CD4-positive, alpha-beta memory T cell (primary cell): ENCODE measurements at regions of chr12 and their contacts with region 1.

Region 1: GRCh38 chr12:93677195-93678064 is at the start of gene CRADD:
- DNase-seq: peak; percentile 93 to 97 (median 96)
- H3K4me3 ChIP-seq: peak within 1 kb of the TSS; percentile 71 to 73
- H3K4me3 Mint-ChIP-seq: peak within 1 kb of the TSS; percentile 97 to 99 (median 98)
- H3K27ac ChIP-seq: peak within 1 kb of the TSS; percentile 99
- H3K27ac Mint-ChIP-seq: peak within 1 kb of the TSS; percentile 99 to 100 (median 100)
- H3K4me1 ChIP-seq: peaks cover 19% of the 10 kb centered on the region
- H3K4me1 Mint-ChIP-seq: peaks cover 20 to 37% (median 28%) of the 10 kb centered on the region in 4 donors
- H3K27me3 ChIP-seq: no peaks in the 10 kb centered on the region
- H3K27me3 Mint-ChIP-seq: peaks cover 11 to 12% of the 10 kb centered on the region in 2 donors
- total RNA-seq, gene CRADD: 15.7 to 16.0 TPM

Region 2: DNA sequence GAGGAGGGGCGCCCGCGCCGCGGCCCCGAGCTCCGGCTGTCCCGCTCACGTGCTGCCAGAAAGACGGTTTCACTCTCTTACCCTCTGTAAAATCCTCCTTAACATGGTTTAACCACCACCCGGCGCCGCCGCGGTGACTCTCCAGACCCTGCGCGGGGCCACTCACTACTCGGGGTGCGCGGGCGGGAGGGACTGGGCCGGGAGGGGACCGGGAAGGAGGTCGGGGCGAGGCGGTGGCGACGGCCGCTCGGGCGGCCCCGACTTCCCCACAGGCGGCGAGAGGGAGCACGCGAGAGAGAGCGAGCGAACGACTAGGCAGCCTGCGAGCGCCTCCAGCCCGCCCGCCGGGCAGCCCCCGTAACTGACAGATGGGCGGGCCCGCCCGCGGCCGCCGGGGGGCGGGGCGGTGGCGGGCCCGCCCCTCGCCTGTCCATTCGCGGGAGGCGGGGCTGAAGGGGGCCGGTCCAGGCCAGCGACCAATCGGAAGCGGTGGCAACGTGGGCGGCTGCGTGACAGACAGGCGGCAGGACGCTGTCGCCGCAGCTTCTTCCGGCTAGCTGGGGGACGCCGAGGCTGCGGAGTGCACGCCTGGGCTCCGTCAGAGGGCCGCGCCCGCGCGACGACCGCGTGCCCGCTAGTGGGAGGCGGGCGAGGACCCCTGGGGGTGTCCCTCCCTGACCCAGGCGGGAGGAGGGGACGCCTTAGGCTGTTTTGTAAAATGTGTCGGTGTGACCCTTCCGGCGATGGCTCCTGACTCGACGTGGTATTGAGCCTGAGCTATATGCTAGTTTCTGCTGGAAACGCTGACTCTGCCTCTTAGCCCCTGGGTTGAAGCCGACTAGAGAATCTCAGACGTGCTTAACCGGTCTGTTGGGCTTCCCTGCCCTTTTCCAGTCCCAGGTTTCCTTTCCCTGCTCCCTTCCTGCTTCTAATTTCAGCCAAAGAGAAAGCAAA is 748.2 kb before region 1 on chr12 and contains the start of gene EEA1:
- CTCF ChIA-PET with region 1: no interaction called
- POLR2A ChIA-PET with region 1: interaction called, 5 read pairs
- intact Hi-C with region 1: loop called (anchors 5 kb)
- DNase-seq: peak; percentile 92 to 94 (median 94)
- H3K4me3 ChIP-seq: peak within 1 kb of the TSS; percentile 57 to 59
- H3K4me3 Mint-ChIP-seq: peak within 1 kb of the TSS; percentile 89 to 94 (median 92)
- H3K27ac ChIP-seq: peak within 1 kb of the TSS; percentile 90
- H3K27ac Mint-ChIP-seq: peak within 1 kb of the TSS; percentile 87 to 98 (median 95)
- H3K4me1 ChIP-seq: peaks cover 28% of the 10 kb centered on the region
- H3K4me1 Mint-ChIP-seq: peaks cover 21 to 38% (median 32%) of the 10 kb centered on the region in 4 donors
- H3K27me3 ChIP-seq: no peaks in the 10 kb centered on the region
- H3K27me3 Mint-ChIP-seq: no peaks in the 10 kb centered on the region
- total RNA-seq, gene EEA1: 16.1 to 16.4 TPM

Region 3: DNA sequence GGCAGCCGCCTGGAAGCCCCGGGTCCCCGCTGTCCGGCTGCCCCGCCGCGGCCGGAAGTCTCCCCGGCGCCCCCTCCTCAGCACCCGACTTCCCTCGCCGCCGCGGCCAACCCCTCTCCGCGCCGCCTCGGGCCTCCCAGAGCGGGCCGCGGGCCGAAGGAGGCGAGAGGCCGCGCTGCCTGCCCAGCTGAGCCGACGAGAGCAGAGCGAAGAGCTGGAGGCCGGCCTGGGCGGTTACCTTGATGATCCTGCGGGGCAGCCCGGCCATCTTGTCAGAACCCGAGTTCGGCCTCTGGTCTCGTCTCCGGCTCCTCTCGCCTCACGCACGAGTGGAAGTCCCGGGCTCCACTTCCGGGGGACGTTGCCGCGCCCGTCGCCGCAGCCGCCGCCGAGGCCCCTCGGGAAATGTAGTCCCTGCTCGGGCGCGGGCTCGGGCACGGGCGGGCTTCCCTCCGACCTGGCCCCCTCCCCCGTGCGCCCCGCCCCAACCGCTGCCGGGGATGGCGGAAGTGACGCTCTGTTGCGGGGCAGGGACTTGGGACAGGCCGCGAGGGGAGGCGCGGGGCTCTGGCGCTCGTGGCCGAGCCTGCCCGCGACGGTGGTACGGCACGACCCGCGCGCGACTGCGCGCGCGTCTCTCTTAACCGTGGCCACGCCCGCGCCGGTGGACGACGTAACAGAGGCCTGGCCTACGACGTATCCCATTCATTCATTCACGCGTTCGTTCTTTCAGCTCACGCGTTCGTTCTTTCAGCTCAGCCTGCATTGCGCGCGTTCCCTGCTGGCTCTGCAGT is 235.6 kb before region 1 on chr12 and contains the start of gene UBE2N:
- CTCF ChIA-PET with region 1: no interaction called
- POLR2A ChIA-PET with region 1: interaction called, 5 read pairs
- intact Hi-C with region 1: loop called (anchors 1 kb)
- DNase-seq: peak; percentile 95 to 97 (median 97)
- H3K4me3 ChIP-seq: peak within 1 kb of the TSS; percentile 90 to 98
- H3K4me3 Mint-ChIP-seq: peak within 1 kb of the TSS; percentile 94 to 98 (median 97)
- H3K27ac ChIP-seq: peak within 1 kb of the TSS; percentile 95
- H3K27ac Mint-ChIP-seq: peak within 1 kb of the TSS; percentile 94 to 100 (median 99)
- H3K4me1 ChIP-seq: peaks cover 48% of the 10 kb centered on the region
- H3K4me1 Mint-ChIP-seq: peaks cover 36 to 51% (median 45%) of the 10 kb centered on the region in 4 donors
- H3K27me3 ChIP-seq: no peaks in the 10 kb centered on the region
- H3K27me3 Mint-ChIP-seq: no peaks in the 10 kb centered on the region
- total RNA-seq, gene UBE2N: 71.2 to 72.8 TPM

Region 4: GRCh38 chr12:93742110-93742934 is 64.9 kb after region 1 on chr12:
- CTCF ChIA-PET with region 1: no interaction called
- POLR2A ChIA-PET with region 1: no interaction called
- intact Hi-C with region 1: loop called (anchors 5 kb)
- DNase-seq: peak; percentile 40 to 58 (median 50)
- H3K4me3 ChIP-seq: peak overlapping the region; percentile 60 to 72
- H3K4me3 Mint-ChIP-seq: peak overlapping the region; percentile 91 to 98 (median 94)
- H3K27ac ChIP-seq: peak overlapping the region; percentile 63
- H3K27ac Mint-ChIP-seq: peak overlapping the region; percentile 87 to 95 (median 94)
- H3K4me1 ChIP-seq: peaks cover 25% of the 10 kb centered on the region
- H3K4me1 Mint-ChIP-seq: peaks cover 9 to 40% (median 21%) of the 10 kb centered on the region in 4 donors
- H3K27me3 ChIP-seq: no peaks in the 10 kb centered on the region
- H3K27me3 Mint-ChIP-seq: no peaks in the 10 kb centered on the region

Region 5: DNA sequence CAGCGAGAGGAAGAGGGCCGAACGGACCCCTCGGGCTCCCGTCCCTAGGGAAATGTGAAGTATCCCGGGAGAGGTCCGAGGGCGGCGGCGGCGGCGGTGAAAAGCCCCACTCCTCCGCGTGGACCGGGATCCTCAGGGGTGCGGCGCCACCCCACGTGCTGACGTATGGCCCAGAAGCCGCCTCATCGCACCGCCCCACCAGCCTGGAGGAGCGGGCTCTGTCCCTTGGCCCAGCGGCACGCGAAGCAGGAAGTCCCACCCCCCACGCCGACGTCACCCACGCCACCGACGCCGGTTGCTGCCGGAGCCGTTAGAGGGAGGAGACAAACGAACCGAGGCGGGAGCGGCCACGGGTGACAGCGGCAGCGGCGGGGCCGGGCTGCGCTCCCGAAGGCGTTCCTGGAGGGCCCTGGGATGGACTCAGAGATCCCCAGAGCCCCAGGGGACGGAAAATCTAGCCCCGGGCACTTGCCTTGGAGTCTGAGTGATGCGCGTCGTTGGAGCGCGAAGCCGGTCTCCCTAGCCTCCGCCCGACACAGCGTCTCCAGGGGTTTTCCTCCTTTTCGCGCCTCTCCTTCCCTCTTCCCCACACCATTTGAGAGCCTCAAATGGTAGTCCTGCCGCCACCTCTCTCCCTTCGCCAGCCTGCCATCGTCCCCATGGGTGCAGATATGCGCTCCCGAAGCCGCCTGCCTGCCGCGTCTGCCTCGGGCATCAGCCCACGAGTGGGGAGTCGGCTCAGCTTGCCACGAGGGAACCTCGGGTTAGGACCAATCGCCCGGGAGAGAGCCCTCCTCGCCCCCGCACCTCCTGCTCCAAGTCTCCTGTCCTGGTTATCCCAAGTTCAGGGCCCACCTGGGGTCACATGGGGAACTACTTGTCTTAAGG is 782.5 kb after region 1 on chr12 and contains the start of gene CEP83:
- CTCF ChIA-PET with region 1: no interaction called
- POLR2A ChIA-PET with region 1: no interaction called
- intact Hi-C with region 1: loop called (anchors 1 kb)
- DNase-seq: peak; percentile 93 to 97 (median 95)
- H3K4me3 ChIP-seq: peak within 1 kb of the TSS; percentile 89 to 98
- H3K4me3 Mint-ChIP-seq: peak within 1 kb of the TSS; percentile 94 to 98 (median 96)
- H3K27ac ChIP-seq: peak within 1 kb of the TSS; percentile 82
- H3K27ac Mint-ChIP-seq: peak within 1 kb of the TSS; percentile 93 to 98 (median 96)
- H3K4me1 ChIP-seq: peaks cover 15% of the 10 kb centered on the region
- H3K4me1 Mint-ChIP-seq: peaks cover 17 to 47% (median 25%) of the 10 kb centered on the region in 4 donors
- H3K27me3 ChIP-seq: no peaks in the 10 kb centered on the region
- H3K27me3 Mint-ChIP-seq: peaks cover 8% of the 10 kb centered on the region in 2 donors
- total RNA-seq, gene CEP83: 11.2 to 14.8 TPM

Region 6: DNA sequence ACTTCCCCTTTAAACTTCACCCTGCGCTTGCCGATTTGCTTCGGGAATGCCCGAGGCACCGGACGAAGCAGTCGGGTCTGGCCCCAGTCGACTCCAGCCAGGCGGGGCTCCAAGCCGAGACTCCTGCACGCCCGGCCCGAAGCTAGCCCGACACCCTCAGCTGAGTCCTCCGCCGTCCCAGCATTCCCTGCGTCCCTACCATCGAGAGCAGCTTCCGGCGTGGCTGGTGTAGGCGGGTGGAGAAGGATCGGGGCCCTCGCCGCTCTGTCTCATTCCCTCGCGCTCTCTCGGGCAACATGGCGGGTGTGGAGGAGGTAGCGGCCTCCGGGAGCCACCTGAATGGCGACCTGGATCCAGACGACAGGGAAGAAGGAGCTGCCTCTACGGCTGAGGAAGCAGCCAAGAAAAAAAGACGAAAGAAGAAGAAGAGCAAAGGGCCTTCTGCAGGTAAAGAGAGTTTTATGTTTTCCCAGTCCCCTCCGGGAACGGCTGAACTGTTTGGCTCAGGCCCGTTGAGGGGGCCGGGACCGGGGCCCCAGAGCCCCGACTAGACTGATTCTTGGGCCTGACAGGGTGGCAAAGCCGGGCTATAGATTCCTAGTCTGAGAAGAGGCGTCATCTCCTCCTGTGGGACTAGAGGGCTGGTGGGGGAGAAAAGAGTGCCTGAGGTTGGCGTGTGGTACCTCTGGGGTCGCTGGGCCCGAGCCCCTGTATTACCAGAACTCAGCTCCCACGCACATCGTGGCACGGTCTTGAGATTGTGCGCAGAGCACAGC is 1796.6 kb after region 1 on chr12 and contains the start of gene METAP2:
- CTCF ChIA-PET with region 1: no interaction called
- POLR2A ChIA-PET with region 1: interaction called, 14 read pairs
- intact Hi-C with region 1: loop called (anchors 2 kb)
- DNase-seq: peak; percentile 87 to 92 (median 88)
- H3K4me3 ChIP-seq: peak within 1 kb of the TSS; percentile 83 to 99
- H3K4me3 Mint-ChIP-seq: peak within 1 kb of the TSS; percentile 99 to 100 (median 100)
- H3K27ac ChIP-seq: peak within 1 kb of the TSS; percentile 78
- H3K27ac Mint-ChIP-seq: peak within 1 kb of the TSS; percentile 90 to 100 (median 98)
- H3K4me1 ChIP-seq: peaks cover 50% of the 10 kb centered on the region
- H3K4me1 Mint-ChIP-seq: peaks cover 36 to 64% (median 54%) of the 10 kb centered on the region in 4 donors
- H3K27me3 ChIP-seq: no peaks in the 10 kb centered on the region
- H3K27me3 Mint-ChIP-seq: no peaks in the 10 kb centered on the region
- total RNA-seq, gene METAP2: 50.7 to 52.7 TPM